Sigmoid colon (tissue), 7 donors: ENCODE measurements at regions of chr4 and their contacts with region 1.

Region 1: GRCh38 chr4:158036998-158037397 is 135.8 kb downstream of the GASK1B start:
- DNase-seq: no peak
- H3K4me3 ChIP-seq: no peak overlapping the region
- H3K27ac ChIP-seq: no peak overlapping the region
- H3K4me1 ChIP-seq: peaks cover 0 to 14% (median 6%) of the 10 kb centered on the region in 4 donors
- H3K27me3 ChIP-seq: no peaks in the 10 kb centered on the region
- CTCF ChIP-seq: no peak
- EP300 ChIP-seq: no peak
- POLR2A ChIP-seq: no peak

Region 2: GRCh38 chr4:158074851-158075250 is 37.9 kb after region 1 on chr4:
- intact Hi-C with region 1: loop called (anchors 2 kb)
- DNase-seq: no peak
- H3K4me3 ChIP-seq: no peak overlapping the region
- H3K27ac ChIP-seq: no peak overlapping the region
- H3K4me1 ChIP-seq: peaks cover 0 to 8% (median 3%) of the 10 kb centered on the region in 4 donors
- H3K27me3 ChIP-seq: no peaks in the 10 kb centered on the region
- CTCF ChIP-seq: no peak
- EP300 ChIP-seq: no peak
- POLR2A ChIP-seq: no peak